Left cardiac atrium (tissue), 4 donors: ENCODE measurements at regions of chr12 and their contacts with region 1.

Region 1: DNA sequence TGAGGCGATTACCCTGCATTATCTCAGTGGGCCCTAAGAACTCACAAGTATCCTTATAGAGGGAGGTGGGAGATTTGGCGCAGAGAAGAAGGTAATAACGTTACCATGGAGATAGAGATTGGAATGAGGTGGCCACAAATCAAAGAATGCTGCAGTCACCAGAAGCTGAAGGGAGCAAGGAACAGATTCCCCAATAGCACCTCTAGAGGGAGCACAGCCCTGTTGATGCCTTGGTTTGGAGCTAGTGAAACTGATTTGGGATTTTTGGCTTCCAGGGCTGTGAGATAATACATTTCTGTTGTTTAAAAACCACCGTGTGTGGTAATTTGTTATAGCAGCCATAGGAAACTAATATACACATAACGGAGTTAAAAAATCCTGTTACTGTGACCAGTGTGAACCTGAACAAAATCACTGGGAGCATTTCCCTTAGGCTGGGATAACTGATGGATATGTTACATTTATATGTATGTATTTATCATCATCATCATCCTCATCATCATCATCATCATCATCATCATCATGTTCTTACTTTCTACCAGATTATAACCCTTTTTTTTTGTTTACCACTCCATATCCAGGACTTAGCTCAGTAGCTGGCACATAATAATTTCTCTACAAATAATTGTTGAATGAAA is 100.3 kb downstream of the LIN7A start:
- DNase-seq: no peak
- ATAC-seq: peak; percentile 81 to 89

Region 2: DNA sequence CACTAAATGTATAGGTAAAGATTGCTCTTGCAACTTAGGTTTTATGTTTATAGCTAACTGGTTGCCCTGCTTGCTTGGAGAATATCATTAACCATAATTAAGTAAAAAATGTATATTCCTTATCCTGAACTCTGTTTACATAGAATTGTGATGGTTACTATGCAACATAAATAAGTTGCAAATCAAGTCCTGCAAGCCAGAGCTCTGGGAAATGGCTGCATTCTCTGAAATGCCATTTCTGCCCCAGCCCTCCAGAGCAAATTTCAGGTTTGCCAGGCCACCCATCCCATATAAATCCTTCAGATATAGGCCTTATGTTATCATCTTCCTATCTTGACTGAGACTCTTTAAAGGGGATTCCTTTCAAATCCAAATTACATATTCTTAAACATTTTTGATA is 248.4 kb before region 1 on chr12:
- intact Hi-C with region 1: no loop called
- DNase-seq: no peak
- ATAC-seq: no peak

Region 3: DNA sequence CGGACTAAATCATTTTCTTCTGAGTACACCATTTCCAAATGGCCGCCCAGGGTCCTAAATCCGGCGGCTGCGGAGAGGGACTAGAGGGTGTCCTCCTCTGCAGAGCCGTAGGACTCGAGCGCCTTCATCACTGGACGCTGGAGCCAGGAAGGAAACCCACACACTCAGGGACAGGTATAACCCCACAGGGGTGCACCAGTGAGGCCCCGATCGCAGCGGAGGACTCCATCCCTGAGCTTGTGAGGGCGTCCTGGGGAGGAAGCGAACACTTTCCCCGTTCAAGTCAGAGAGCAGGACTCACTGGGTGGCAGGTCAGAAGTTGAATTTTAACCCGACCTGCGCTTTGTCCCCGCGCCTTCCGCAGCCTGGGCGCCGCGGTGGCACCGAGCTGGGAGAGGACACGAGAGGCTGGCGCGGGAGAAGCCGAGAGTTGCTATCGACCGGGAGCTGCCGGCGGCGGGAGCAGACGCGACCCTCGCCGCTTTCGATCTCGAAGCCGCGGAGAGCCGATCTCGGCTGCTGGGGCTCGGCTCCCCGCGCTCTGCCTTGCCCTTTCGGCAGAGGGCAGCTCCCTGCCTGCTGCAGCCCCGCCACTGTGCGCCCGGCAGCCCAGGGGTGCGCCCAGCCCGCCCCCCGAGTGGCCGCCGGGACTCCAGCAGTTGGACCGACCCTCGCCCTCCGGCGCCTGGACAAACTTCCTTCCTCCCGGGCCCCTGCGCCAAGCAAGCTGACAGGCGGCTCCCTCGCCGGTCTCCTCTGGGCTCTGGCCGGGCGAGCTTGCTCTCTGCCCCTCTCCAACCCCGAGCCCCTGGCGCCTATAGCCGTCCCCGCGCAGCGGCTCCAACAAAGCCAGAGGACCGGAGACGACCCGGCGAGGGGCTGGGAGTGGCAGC is 99.3 kb after region 1 on chr12:
- intact Hi-C with region 1: loop called (anchors 5 kb)
- DNase-seq: peak; percentile 40
- ATAC-seq: peak; percentile 75 to 87

Region 4: DNA sequence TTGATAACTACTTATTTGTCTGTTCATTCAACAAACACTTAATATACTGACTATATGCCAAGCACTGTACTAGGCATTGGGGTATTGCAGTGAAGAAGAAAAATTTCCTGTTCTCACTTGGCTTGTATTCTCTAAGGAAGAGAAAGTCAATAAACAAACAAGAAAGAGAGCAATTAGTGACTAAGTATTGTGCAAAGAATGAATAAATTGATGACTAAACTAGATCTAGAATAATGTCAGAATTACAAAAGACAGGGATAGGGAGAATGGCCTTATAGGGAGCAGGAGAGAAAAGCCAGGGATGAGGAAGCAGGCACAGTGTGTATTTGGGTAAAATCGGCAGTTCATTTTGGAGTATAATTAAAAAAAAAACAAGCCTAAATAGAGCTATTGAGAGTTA is 104.4 kb after region 1 on chr12:
- intact Hi-C with region 1: loop called (anchors 5 kb)
- DNase-seq: no peak
- ATAC-seq: no peak